ENCODE measurements at regions of chr20 and their contacts with region 1.

Region 1: GRCh38 chr20:32858701-32859372 is at the start of gene EFCAB8:
- DNase-seq: no peak
- H3K4me3 ChIP-seq: no peak within 1 kb of the TSS
- H3K27ac ChIP-seq: no peak within 1 kb of the TSS
- H3K4me1 ChIP-seq: no peaks in the 10 kb centered on the region
- H3K27me3 ChIP-seq: no peaks in the 10 kb centered on the region
- CTCF ChIP-seq: 0 out of 2 replicates have a peak, but pooled peaks have one; percentile 14
- total RNA-seq, gene EFCAB8: 0.13 TPM in 1 of 2 replicates, not detected in the other

Region 2: GRCh38 chr20:32819992-32820710 is 38.7 kb before region 1 on chr20:
- CTCF ChIA-PET with region 1: no interaction called
- POLR2A ChIA-PET with region 1: no interaction called
- intact Hi-C with region 1: loop called (anchors 5 kb)
- DNase-seq: peak; percentile 79
- H3K4me3 ChIP-seq: peak overlapping the region; percentile 93
- H3K27ac ChIP-seq: peak overlapping the region; percentile 95
- H3K4me1 ChIP-seq: peaks cover 28% of the 10 kb centered on the region
- H3K27me3 ChIP-seq: no peaks in the 10 kb centered on the region
- CTCF ChIP-seq: no peak

Region 3: GRCh38 chr20:33037456-33037855 is 178.6 kb after region 1 on chr20:
- CTCF ChIA-PET with region 1: no interaction called
- POLR2A ChIA-PET with region 1: no interaction called
- intact Hi-C with region 1: no loop called
- DNase-seq: no peak
- H3K4me3 ChIP-seq: no peak overlapping the region
- H3K27ac ChIP-seq: no peak overlapping the region
- H3K4me1 ChIP-seq: no peaks in the 10 kb centered on the region
- H3K27me3 ChIP-seq: no peaks in the 10 kb centered on the region
- CTCF ChIP-seq: no peak